Astrocyte of the cerebellum (primary cell): ENCODE measurements at regions of chr10 and their contacts with region 1.

Region 1: GRCh38 chr10:52143338-52143737 is 170.7 kb upstream of the DKK1 start:
- DNase-seq: peak; percentile 3
- H3K4me3 ChIP-seq: no peak overlapping the region
- CTCF ChIP-seq: no peak

Region 2: DNA sequence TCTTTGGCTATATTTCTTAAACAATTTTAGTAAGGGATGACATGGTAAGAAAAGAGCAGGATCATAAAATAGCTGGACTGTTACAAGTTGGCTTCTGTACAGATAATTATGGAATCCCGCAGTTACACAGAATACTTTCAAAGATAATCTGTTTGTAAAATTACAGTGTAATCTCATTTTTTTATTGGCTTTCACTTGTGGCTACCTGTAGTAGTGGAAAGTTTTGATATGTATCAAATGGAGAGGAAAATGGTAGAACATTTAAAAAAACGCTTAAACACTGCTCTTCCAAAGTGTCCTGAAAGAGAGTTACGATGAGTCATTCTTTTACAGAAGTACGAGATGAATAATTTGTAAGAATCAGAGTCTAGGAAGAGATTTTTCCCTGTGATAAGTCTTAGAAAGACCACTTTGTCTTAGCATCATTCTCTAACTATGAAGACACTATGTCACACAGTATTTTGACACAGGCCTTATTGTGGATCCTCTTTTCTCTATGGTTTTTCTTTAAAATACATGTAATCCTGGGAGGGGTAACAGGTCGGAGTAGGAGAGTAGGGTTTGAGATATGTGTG is 44.2 kb before region 1 on chr10:
- in situ Hi-C with region 1: loop called (anchors 5 kb)
- DNase-seq: no peak
- H3K4me3 ChIP-seq: no peak overlapping the region
- CTCF ChIP-seq: no peak

Region 3: GRCh38 chr10:52801947-52802346 is 658.6 kb after region 1 on chr10:
- in situ Hi-C with region 1: no loop called
- DNase-seq: peak; percentile 4
- H3K4me3 ChIP-seq: no peak overlapping the region
- CTCF ChIP-seq: no peak